Dorsolateral prefrontal cortex (tissue), 120 donors: ENCODE measurements at regions of chr7 and their contacts with region 1.

Region 1: DNA sequence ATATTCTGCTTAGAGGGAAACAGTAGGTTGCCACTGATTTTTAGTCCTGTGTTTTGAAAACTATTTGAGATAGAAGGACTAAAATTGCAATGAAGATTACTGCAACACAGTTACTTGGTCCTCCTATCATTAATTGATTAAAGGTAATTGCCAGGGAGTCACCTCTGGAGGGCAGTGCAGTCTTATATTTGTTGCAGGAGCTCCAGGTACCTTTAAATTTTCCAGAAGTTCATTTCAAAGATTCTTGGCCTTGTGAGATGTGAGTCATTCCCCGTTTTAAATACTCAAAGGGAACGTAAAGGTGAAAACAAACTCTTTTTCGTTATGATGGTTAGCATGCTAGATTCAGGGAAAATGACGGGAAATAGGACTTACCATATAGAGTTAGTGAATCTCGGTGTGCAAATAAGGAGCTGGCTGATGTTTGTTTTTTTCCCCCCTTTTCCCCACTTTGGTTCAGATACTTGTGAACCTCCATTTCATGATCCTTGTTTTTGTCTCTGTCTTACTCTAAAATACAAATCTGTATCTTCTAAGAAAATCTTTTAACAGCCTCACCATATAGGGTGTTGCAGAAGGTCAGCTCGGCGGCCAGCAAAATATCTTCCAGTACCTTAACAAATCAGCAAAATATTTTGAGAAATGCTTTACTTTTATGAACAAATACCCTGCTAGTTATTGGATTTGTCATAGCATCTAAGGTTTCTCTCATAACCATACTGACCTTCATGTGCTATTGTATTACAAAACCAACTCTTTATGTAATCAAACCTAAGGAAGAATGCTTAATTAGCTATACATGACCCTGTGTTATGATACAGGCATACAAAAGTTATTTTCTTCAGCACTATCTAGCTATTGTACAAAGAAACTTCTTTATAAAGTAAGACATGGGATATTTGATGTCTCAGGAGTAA is 143.0 kb upstream of the HDAC9 start:
- DNase-seq: peak in 5 of 10 donors; percentile 26 to 52 (median 41)
- H3K4me3 ChIP-seq: no peak overlapping the region
- H3K27ac ChIP-seq: no peak overlapping the region
- H3K27me3 ChIP-seq: no peaks in the 10 kb centered on the region
- CTCF ChIP-seq: peak; percentile 47 to 90 (median 68)

Region 2: GRCh38 chr7:18495412-18496340 is 143.1 kb after region 1 on chr7 and contains the start of gene HDAC9:
- intact Hi-C with region 1: loop called in 1 of 2 experiments (anchors 10 kb)
- DNase-seq: peak in 9 of 10 donors; percentile 58 to 82 (median 67)
- H3K4me3 ChIP-seq: peak within 1 kb of the TSS; percentile 36 to 82 (median 62)
- H3K27ac ChIP-seq: peak within 1 kb of the TSS; percentile 52 to 95 (median 88)
- H3K27me3 ChIP-seq: no peaks in the 10 kb centered on the region
- CTCF ChIP-seq: peak in 4 of 56 donors; percentile 3 to 8 (median 4)
- total RNA-seq, gene HDAC9: 40.3 to 96.7 (median 63.1) TPM

Region 3: GRCh38 chr7:18570890-18571478 is 218.4 kb after region 1 on chr7:
- intact Hi-C with region 1: loop called (anchors 2 to 5 kb)
- DNase-seq: no peak
- H3K4me3 ChIP-seq: no peak overlapping the region
- H3K27ac ChIP-seq: no peak overlapping the region
- H3K27me3 ChIP-seq: no peaks in the 10 kb centered on the region
- CTCF ChIP-seq: peak; percentile 21 to 86 (median 68)

Region 4: DNA sequence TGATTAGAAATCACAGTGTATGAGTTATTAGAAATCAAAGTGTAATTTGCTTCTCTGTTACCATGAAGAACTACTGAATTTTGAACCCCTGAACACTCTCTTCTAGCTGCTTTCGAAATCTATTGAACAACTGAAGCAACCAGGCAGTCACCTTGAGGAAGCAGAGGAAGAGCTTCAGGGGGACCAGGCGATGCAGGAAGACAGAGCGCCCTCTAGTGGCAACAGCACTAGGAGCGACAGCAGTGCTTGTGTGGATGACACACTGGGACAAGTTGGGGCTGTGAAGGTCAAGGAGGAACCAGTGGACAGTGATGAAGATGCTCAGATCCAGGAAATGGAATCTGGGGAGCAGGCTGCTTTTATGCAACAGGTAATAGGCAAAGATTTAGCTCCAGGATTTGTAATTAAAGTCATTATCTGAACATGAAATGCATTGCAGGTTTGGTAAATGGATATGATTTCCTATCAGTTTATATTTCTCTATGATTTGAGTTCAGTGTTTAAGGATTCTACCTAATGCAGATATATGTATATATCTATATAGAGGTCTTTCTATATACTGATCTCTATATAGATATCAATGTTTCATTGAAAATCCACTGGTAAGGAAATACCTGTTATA is 313.6 kb after region 1 on chr7:
- intact Hi-C with region 1: loop called (anchors 2 to 5 kb)
- DNase-seq: peak; percentile 65 to 81 (median 74)
- H3K4me3 ChIP-seq: no peak overlapping the region
- H3K27ac ChIP-seq: no peak overlapping the region
- H3K27me3 ChIP-seq: no peaks in the 10 kb centered on the region
- CTCF ChIP-seq: peak; percentile 64 to 97 (median 90)

Region 5: GRCh38 chr7:19665399-19666008 is 1312.9 kb after region 1 on chr7:
- intact Hi-C with region 1: loop called in 1 of 2 experiments (anchors 5 kb)
- DNase-seq: no peak
- H3K4me3 ChIP-seq: no peak overlapping the region
- H3K27ac ChIP-seq: no peak overlapping the region
- H3K27me3 ChIP-seq: peaks cover 0 to 26% (median 0%) of the 10 kb centered on the region in 45 donors
- CTCF ChIP-seq: peak; percentile 52 to 85 (median 71)